ENCODE measurements at regions of chr6 and their contacts with region 1.

Region 1: GRCh38 chr6:157021344-157021992 is 244.3 kb downstream of the ARID1B start:
- DNase-seq: peak; percentile 97
- H3K4me3 Mint-ChIP-seq: peak overlapping the region; percentile 92
- H3K27ac Mint-ChIP-seq: peak overlapping the region; percentile 100
- H3K4me1 Mint-ChIP-seq: peaks cover 38% of the 10 kb centered on the region
- H3K27me3 Mint-ChIP-seq: no peaks in the 10 kb centered on the region

Region 2: DNA sequence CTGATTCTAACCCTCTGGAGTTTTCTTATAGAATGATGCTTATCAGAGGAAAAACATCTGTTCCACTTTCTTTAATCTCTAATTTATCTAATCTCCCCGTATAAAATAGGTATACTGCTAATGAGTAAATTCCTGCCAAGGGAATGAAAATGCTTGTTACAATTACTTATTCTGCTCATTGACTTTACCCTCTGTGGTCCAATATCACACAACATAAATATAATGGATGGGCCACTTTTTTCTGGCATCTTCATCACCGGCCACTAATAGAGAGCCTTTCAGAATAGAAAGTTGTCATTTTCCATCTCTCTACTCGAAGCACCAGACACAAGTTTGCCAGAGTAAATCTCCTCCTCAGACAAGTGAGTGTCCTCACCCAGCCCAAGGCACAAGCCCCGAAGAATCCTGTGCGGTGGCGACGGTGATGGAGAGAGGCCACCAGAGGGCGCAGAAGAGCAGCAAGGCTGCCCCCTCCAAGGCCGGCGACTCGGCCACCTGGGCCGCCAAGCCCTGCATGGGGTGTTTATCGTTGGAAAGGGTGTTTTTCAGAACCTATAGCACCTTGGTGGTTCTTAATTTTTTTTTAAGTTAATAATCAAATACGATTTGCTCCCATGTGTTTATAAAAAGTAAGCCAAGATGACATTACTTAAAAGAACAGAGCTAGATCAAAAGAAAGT is 457.2 kb before region 1 on chr6:
- intact Hi-C with region 1: loop called (anchors 10 kb)
- DNase-seq: peak; percentile 92
- H3K4me3 Mint-ChIP-seq: no peak overlapping the region
- H3K27ac Mint-ChIP-seq: no peak overlapping the region
- H3K4me1 Mint-ChIP-seq: peaks cover 2% of the 10 kb centered on the region
- H3K27me3 Mint-ChIP-seq: peaks cover 13% of the 10 kb centered on the region

Region 3: GRCh38 chr6:156857573-156857972 is 163.9 kb before region 1 on chr6:
- intact Hi-C with region 1: loop called (anchors 1 kb)
- DNase-seq: no peak
- H3K4me3 Mint-ChIP-seq: no peak overlapping the region
- H3K27ac Mint-ChIP-seq: peak overlapping the region; percentile 92
- H3K4me1 Mint-ChIP-seq: peaks cover 48% of the 10 kb centered on the region
- H3K27me3 Mint-ChIP-seq: no peaks in the 10 kb centered on the region

Region 4: DNA sequence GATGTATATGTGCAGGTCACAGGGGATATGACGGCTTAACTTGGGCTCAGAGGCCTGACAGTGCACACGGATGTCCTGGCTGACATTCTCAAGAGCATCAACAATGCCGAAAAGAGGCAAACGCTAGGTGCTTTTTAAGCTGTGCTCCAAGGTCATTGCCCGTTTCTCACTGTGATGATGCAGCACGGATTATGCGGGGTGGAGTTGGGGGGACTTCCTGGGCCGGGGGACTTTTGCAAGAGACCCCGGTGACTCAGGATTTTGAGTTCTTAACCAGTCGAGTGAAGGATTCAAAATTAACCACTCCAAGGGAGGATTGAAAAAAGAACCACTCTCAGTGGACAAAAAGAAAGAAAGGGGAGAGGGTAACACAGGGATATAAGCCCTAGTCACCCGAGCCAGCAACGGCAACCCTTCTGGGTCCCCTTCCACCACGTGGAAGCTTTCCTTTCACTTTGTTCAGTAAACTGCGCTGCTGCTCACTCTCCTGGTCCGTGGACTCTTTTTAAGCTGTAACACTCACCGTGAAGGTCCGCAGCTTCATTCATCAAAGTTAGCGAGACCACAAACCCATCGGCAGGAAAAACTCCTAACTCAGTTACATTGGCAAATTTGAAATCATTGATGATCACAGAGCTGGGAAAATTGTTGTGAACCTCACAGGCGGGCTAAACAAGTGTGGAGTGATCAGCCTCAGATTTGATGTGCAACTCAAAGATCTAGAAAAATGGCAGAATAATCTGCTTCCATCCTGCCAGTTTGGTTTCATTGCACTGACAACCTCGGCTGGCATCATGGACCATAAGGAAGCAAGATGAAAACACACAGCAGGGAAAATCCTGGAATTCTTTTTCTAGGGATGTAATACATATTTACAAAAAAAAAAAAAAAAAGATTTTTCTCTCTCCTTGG is 45.0 kb before region 1 on chr6:
- intact Hi-C with region 1: loop called (anchors 5 kb)
- DNase-seq: peak; percentile 68
- H3K4me3 Mint-ChIP-seq: peak overlapping the region; percentile 82
- H3K27ac Mint-ChIP-seq: peak overlapping the region; percentile 86
- H3K4me1 Mint-ChIP-seq: peaks cover 28% of the 10 kb centered on the region
- H3K27me3 Mint-ChIP-seq: no peaks in the 10 kb centered on the region

Region 5: GRCh38 chr6:157099912-157100593 is 78.6 kb after region 1 on chr6:
- intact Hi-C with region 1: loop called (anchors 1 kb)
- DNase-seq: peak; percentile 84
- H3K4me3 Mint-ChIP-seq: peak overlapping the region; percentile 73
- H3K27ac Mint-ChIP-seq: peak overlapping the region; percentile 92
- H3K4me1 Mint-ChIP-seq: peaks cover 39% of the 10 kb centered on the region
- H3K27me3 Mint-ChIP-seq: no peaks in the 10 kb centered on the region